Spleen (tissue), 13 donors: ENCODE measurements at regions of chr7 and their contacts with region 1.

Region 1: DNA sequence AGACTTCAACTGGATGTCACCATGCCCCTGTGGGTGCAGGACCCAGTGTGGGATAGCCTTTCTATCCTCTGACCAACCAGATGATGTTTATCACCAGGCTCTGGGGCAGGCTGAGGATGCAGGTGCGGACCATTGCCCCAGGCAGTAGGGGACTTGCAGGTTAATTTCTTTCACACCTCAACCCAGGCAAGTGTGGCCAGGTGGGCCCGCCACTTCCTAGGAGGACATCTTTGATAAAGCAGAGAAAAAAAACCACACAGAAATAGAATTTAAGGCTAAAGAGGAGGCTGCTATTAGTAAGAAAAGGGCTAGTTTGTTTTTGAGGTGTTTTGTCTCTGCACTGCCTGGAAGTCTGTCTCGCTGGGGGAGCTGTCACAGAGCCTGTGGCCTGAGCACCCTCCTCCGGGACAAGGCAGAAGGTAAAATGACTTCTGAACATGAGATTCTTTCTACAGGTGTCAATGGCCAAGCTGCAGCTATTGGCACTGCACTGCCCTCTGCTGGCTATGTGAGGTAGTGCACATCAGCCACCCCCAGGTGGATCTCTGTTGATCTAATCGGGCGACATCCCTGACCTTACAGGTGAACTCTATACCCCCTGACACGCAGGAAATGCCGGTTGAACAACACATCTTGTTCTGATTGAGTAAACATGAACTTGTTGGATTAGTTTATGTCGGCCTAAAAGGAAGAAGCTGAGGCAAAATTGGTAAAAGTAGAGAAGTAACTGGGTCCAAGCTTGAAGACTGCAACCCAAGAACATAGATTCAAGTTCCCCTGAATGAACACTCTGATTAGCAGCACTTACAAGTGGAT is 21.0 kb downstream of the UPP1 start:
- DNase-seq: peak; percentile 93
- H3K4me3 ChIP-seq: no peak overlapping the region
- H3K27ac ChIP-seq: peak overlapping the region in 3 of 8 donors; percentile 43 to 50 (median 45)
- H3K4me1 ChIP-seq: peaks cover 0 to 14% (median 9%) of the 10 kb centered on the region in 6 donors
- H3K27me3 ChIP-seq: no peaks in the 10 kb centered on the region
- CTCF ChIP-seq: peak; percentile 94 to 99 (median 98)
- POLR2A ChIP-seq: no peak

Region 2: DNA sequence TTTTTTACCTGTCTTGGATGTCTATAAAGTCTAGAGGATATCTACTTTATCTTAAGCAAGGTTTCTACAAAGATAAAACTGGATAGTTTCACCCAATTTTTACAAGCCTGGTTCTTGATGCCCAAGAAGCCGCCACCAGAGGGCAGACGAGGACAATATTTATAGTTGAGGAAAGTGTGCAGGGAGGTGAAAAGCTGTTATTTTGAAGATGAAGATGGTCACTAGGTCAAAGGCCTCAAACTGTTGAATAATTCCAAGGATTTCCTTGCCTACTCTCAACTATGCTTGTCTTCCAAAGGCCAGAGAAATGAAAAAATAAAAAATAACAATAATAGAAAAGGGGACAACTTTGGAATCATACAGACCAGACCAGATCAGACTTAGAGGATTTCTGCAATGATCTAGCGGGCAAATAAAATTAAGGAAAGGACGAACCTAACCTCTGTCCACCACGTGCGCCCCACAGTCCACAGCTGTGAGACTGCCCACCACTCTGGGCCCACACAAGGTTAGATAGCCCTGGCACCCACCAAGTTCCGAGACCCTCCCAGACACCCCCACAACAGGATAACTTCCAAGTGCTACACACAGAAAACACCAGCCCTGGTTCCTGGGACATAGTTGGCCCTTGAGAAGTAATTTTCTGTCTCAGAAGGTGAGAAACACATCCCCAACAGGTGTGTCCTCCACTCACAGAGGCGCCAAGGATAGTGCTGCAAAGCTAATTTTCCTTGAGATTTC is 164.6 kb before region 1 on chr7:
- intact Hi-C with region 1: loop called (anchors 5 kb)
- DNase-seq: peak; percentile 89
- H3K4me3 ChIP-seq: no peak overlapping the region
- H3K27ac ChIP-seq: no peak overlapping the region
- H3K4me1 ChIP-seq: peaks cover 4 to 57% (median 24%) of the 10 kb centered on the region in 6 donors
- H3K27me3 ChIP-seq: no peaks in the 10 kb centered on the region
- CTCF ChIP-seq: peak; percentile 56 to 90 (median 82)
- POLR2A ChIP-seq: no peak

Region 3: DNA sequence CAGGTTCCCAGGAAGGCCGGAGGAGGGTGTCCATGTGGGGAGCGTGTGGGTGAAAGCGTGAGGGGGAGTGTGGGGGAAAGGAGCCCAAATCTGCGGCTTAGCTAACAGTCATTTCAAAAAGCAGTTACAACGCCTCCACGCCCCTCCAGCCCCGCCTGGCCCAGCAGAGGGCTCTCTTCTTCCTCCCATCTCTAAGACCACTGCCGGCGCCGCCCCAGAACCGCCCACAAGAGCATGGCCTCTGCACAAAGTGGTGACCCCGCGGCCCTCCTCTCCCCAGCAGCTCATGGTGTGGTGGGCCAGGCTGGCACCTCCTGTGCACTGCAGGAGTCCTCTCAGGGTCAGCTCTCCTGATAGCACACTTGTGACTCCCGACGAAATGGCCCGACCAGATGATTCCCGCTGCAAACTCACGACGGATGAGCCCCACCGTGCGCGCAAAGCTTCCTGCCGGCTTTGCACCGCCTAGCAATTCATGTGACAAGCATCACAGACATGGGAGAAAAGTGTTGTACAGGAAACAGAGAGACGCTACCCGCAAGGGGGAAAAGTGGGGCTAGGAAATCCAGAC is 118.2 kb before region 1 on chr7:
- intact Hi-C with region 1: loop called (anchors 2 kb)
- DNase-seq: peak; percentile 97
- H3K4me3 ChIP-seq: peak overlapping the region; percentile 50 to 76 (median 62)
- H3K27ac ChIP-seq: peak overlapping the region; percentile 59 to 85 (median 72)
- H3K4me1 ChIP-seq: peaks cover 5 to 19% (median 11%) of the 10 kb centered on the region in 6 donors
- H3K27me3 ChIP-seq: no peaks in the 10 kb centered on the region
- CTCF ChIP-seq: peak; percentile 54 to 81 (median 70)
- POLR2A ChIP-seq: no peak

Region 4: DNA sequence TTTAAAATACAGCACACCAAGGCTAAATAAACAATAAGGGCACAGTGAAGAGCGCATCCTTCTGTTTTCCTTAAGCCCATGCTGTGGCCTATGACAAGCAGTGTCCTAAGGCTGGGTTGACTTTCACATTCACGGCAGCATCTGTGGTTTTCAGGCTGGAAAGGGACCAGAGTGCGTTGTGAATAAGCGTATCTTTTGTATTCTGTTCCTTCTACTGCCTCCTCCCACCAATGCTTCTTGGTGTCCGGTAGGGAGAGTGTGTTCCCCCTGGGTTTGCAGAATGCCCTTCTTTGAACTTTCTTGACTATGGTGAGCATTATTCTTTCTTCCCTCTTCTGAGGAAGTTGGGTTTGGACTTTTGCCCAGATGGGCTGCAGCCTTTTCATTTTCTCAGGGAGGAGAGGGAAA is 134.8 kb after region 1 on chr7:
- intact Hi-C with region 1: no loop called
- DNase-seq: no peak
- H3K4me3 ChIP-seq: no peak overlapping the region
- H3K27ac ChIP-seq: no peak overlapping the region
- H3K4me1 ChIP-seq: peaks cover 0 to 19% (median 5%) of the 10 kb centered on the region in 6 donors
- H3K27me3 ChIP-seq: no peaks in the 10 kb centered on the region
- CTCF ChIP-seq: no peak
- POLR2A ChIP-seq: no peak